OCI-LY7 (cell line): ENCODE measurements at regions of chr22 and their contacts with region 1.

Region 1: DNA sequence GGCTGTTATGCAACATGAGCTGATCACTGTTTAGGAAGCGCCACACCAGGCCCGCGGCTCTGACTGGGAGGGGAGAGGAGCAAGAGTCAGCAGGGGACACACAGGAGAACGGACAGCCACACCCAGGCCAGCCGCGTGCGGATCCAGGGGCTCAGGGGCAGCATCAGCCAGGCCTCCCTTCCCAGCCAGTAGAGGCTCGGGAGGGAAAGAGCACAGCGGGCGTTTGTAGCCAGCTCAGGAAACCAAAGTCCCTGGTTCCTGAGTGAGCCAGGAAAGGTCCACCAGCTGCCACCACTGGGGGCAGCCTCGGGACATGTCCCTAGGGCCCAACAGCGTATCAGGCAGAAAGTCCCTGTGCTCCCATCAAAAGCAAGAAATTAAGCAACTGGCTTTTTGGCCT is 71.8 kb upstream of the PITPNB start:
- DNase-seq: peak; percentile 67
- H3K4me3 ChIP-seq: peak overlapping the region; percentile 47
- H3K27ac ChIP-seq: peak overlapping the region; percentile 96
- H3K4me1 ChIP-seq: peaks cover 88% of the 10 kb centered on the region
- CTCF ChIP-seq: peak; percentile 77

Region 2: GRCh38 chr22:27919222-27919941 is 71.5 kb before region 1 on chr22 and contains the start of gene PITPNB:
- CTCF ChIA-PET with region 1: interaction called, 10 read pairs
- POLR2A ChIA-PET with region 1: interaction called, 12 read pairs
- intact Hi-C with region 1: loop called (anchors 1 kb)
- DNase-seq: peak; percentile 99
- H3K4me3 ChIP-seq: peak within 1 kb of the TSS; percentile 88
- H3K27ac ChIP-seq: peak within 1 kb of the TSS; percentile 69
- H3K4me1 ChIP-seq: peaks cover 51% of the 10 kb centered on the region
- CTCF ChIP-seq: no peak
- total RNA-seq, gene PITPNB: 21.8 and 26.1 TPM in 2 replicates